ENCODE measurements at regions of chr2 and their contacts with region 1.

Region 1: GRCh38 chr2:67650291-67651133 is 253.4 kb downstream of the ETAA1 start:
- DNase-seq: peak; percentile 96
- H3K4me3 ChIP-seq: peak overlapping the region; percentile 21
- H3K27ac ChIP-seq: peak overlapping the region; percentile 70
- H3K4me1 ChIP-seq: peaks cover 26% of the 10 kb centered on the region
- H3K27me3 ChIP-seq: no peaks in the 10 kb centered on the region
- CTCF ChIP-seq: peak; percentile 89

Region 2: DNA sequence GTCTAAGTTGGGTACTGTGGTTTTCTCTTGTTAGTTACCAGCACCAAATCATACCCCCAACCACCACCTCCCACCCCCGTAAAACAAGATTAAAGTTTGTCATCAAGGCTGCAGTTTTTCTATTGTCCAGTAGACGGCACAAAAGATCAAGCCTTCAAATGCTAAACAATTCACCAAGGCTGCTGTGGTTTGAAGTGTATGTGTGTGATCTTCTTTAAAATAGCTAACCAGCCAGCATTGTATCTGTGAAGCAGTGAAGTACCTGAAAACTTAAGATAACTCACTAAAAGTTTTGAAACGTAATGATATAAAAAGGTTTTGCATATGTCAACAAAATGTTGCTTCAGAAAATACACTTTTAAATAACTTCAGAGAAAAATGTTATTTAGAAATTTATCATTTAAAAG is 1221.4 kb before region 1 on chr2:
- CTCF ChIA-PET with region 1: interaction called, 10 read pairs
- POLR2A ChIA-PET with region 1: no interaction called
- intact Hi-C with region 1: loop called (anchors 10 kb)
- DNase-seq: peak; percentile 87
- H3K4me3 ChIP-seq: no peak overlapping the region
- H3K27ac ChIP-seq: peak overlapping the region; percentile 77
- H3K4me1 ChIP-seq: peaks cover 63% of the 10 kb centered on the region
- H3K27me3 ChIP-seq: no peaks in the 10 kb centered on the region
- CTCF ChIP-seq: peak; percentile 94

Region 3: GRCh38 chr2:67234439-67234838 is 416.1 kb before region 1 on chr2:
- CTCF ChIA-PET with region 1: interaction called, 11 read pairs
- POLR2A ChIA-PET with region 1: no interaction called
- intact Hi-C with region 1: loop called (anchors 2 kb)
- DNase-seq: peak; percentile 88
- H3K4me3 ChIP-seq: no peak overlapping the region
- H3K27ac ChIP-seq: no peak overlapping the region
- H3K4me1 ChIP-seq: peaks cover 25% of the 10 kb centered on the region
- H3K27me3 ChIP-seq: no peaks in the 10 kb centered on the region
- CTCF ChIP-seq: peak; percentile 84

Region 4: GRCh38 chr2:67322353-67323001 is 328.0 kb before region 1 on chr2:
- CTCF ChIA-PET with region 1: interaction called, 4 read pairs
- POLR2A ChIA-PET with region 1: no interaction called
- intact Hi-C with region 1: loop called (anchors 10 kb)
- DNase-seq: peak; percentile 76
- H3K4me3 ChIP-seq: no peak overlapping the region
- H3K27ac ChIP-seq: peak overlapping the region; percentile 34
- H3K4me1 ChIP-seq: peaks cover 49% of the 10 kb centered on the region
- H3K27me3 ChIP-seq: no peaks in the 10 kb centered on the region
- CTCF ChIP-seq: peak; percentile 67

Region 5: DNA sequence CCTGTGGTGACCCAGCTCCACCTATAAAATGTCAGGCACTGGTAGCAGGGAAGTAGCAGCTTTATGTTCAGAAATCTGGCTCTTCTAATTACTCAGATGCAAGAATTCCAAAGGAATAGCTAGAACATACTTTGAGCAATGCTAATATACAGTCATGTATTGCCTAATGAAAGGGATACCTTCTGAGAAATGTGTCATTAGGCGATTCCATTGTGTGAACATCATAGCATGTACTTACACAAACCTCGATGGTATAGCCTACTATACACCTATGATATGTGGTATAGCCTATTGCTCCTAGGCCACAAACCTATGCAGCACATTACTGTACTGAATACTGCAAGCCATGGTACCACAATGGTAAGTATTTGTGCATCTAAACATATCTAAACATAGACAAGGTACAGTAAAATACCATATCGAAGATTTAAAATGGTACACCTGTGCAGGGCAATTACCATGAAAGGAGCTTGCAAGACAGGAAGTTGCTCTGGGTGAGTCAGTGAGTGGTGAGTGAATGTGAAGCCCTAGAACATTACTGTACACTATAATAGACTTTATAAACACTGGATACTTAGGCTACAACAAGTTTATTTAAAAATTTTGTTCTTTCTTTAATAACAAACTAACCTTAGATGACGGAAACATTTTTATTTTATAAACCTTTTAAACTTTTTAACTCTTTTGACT is 303.6 kb before region 1 on chr2:
- CTCF ChIA-PET with region 1: no interaction called
- POLR2A ChIA-PET with region 1: interaction called, 10 read pairs
- intact Hi-C with region 1: no loop called
- DNase-seq: no peak
- H3K4me3 ChIP-seq: no peak overlapping the region
- H3K27ac ChIP-seq: no peak overlapping the region
- H3K4me1 ChIP-seq: no peaks in the 10 kb centered on the region
- H3K27me3 ChIP-seq: no peaks in the 10 kb centered on the region
- CTCF ChIP-seq: no peak

Region 6: DNA sequence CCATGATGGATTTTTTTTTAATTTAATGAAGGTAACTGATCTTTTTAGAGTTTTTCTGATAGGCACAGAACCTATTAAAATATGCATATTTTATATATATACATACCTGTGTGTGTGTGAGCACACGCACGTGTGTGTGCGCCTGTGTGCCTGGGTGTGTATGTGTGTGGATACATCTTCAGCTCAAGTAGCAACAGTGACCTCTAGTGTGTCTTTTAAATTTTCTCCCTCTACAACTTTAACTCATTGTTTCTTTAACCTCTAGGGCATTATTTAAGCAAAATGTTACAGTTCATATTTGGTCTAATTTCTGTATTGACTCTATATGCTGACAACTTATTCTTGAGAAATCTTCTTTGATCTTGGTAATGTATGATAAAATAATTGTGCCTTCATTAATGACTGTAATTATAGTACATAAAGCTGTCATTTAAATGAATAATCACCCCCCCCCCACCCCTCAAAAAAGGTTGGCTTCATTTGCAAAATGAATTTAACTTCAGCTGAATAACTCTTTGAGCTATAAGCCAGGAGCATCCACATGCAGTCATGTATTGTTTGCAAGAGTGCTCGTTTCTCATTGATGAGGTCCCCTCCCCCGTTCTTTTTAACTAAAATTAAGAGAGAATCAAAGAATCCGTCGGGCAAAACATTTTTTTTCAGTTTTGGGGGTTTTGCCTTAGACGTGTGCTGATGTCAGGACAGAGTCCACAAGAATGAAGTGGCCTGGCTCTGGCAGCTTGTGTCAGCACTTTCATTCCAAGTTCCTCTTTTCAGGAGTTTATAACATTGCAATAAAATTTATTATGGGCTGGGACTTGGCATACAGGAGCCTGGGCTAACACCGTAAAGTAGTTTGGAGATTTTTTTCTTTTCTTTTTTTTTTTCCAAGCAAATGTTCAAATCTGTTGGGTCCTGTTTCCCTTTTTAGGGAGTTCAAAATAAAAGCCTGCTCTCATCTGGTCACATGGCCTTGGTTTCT is 173.4 kb before region 1 on chr2:
- CTCF ChIA-PET with region 1: interaction called, 3 read pairs
- POLR2A ChIA-PET with region 1: no interaction called
- intact Hi-C with region 1: loop called (anchors 2 kb)
- DNase-seq: peak; percentile 66
- H3K4me3 ChIP-seq: no peak overlapping the region
- H3K27ac ChIP-seq: no peak overlapping the region
- H3K4me1 ChIP-seq: peaks cover 8% of the 10 kb centered on the region
- H3K27me3 ChIP-seq: no peaks in the 10 kb centered on the region
- CTCF ChIP-seq: peak; percentile 67

Region 7: DNA sequence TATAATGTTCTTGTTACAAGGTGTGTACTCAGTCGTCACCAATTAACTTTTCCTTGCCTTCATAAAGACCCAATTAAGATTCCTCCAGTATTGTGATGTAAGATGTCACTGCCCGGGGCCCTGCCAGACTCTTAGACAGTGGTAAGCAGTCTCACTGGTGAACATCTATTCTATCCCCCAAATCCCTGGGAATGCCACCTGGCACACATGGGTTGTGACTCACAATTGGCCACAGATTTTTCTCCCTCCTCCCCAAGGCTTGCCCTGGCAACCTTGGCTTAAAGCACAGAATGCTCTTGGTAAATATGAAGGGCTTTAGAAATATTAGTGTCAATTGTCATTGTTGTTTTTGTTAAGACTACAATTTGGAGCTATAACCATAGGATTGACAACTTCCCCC is 34.5 kb after region 1 on chr2:
- CTCF ChIA-PET with region 1: no interaction called
- POLR2A ChIA-PET with region 1: no interaction called
- intact Hi-C with region 1: no loop called
- DNase-seq: no peak
- H3K4me3 ChIP-seq: no peak overlapping the region
- H3K27ac ChIP-seq: no peak overlapping the region
- H3K4me1 ChIP-seq: no peaks in the 10 kb centered on the region
- H3K27me3 ChIP-seq: no peaks in the 10 kb centered on the region
- CTCF ChIP-seq: no peak

Region 8: GRCh38 chr2:67840460-67841068 is 190.1 kb after region 1 on chr2:
- CTCF ChIA-PET with region 1: interaction called, 11 read pairs
- POLR2A ChIA-PET with region 1: no interaction called
- intact Hi-C with region 1: loop called (anchors 10 kb)
- DNase-seq: peak; percentile 88
- H3K4me3 ChIP-seq: no peak overlapping the region
- H3K27ac ChIP-seq: no peak overlapping the region
- H3K4me1 ChIP-seq: peaks cover 16% of the 10 kb centered on the region
- H3K27me3 ChIP-seq: no peaks in the 10 kb centered on the region
- CTCF ChIP-seq: peak; percentile 96

Region 9: DNA sequence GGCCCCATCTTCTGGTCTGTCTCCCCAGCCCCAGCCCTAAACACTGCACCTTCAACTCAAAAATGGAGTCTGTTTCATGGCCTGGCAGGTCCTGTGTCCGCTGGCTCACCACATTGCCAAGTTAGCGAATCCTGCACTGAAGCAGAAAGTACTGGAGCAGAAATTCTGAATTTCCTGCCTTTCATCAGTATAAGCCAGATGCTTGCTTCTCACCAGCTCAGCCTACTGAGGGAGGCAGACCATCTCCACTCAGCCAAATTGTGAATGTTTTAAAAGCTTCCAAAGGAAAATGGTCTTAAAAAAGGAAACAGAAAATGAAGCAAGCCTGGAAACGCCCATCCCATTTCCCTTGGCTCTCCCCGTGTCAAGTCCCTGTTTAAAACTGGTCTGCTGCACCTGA is 254.5 kb after region 1 on chr2:
- CTCF ChIA-PET with region 1: no interaction called
- POLR2A ChIA-PET with region 1: no interaction called
- intact Hi-C with region 1: no loop called
- DNase-seq: no peak
- H3K4me3 ChIP-seq: no peak overlapping the region
- H3K27ac ChIP-seq: no peak overlapping the region
- H3K4me1 ChIP-seq: no peaks in the 10 kb centered on the region
- H3K27me3 ChIP-seq: no peaks in the 10 kb centered on the region
- CTCF ChIP-seq: no peak